PC-3 (cell line): ENCODE measurements at regions of chr13 and their contacts with region 1.

Region 1: GRCh38 chr13:73417015-73417623 is 358.3 kb downstream of the KLF5 start:
- DNase-seq: peak; percentile 64
- ATAC-seq: peak; percentile 18; the same call in 1 of the 2 replicates
- H3K4me3 ChIP-seq: no peak overlapping the region
- H3K27ac ChIP-seq: peak overlapping the region; percentile 100
- H3K4me1 ChIP-seq: peaks cover 28% of the 10 kb centered on the region
- H3K27me3 ChIP-seq: no peaks in the 10 kb centered on the region
- CTCF ChIP-seq: peak; percentile 69

Region 2: GRCh38 chr13:73058736-73059459 is 358.2 kb before region 1 on chr13 and contains the start of gene KLF5:
- CTCF ChIA-PET with region 1: no interaction called
- POLR2A ChIA-PET with region 1: no interaction called
- intact Hi-C with region 1: loop called (anchors 5 kb)
- DNase-seq: peak; percentile 96
- ATAC-seq: peak; percentile 84
- H3K4me3 ChIP-seq: peak within 1 kb of the TSS; percentile 97
- H3K27ac ChIP-seq: peak within 1 kb of the TSS; percentile 79
- H3K4me1 ChIP-seq: peaks cover 47% of the 10 kb centered on the region
- H3K27me3 ChIP-seq: no peaks in the 10 kb centered on the region
- CTCF ChIP-seq: no peak
- total RNA-seq, gene KLF5: 51.4 and 53.7 TPM in 2 replicates

Region 3: DNA sequence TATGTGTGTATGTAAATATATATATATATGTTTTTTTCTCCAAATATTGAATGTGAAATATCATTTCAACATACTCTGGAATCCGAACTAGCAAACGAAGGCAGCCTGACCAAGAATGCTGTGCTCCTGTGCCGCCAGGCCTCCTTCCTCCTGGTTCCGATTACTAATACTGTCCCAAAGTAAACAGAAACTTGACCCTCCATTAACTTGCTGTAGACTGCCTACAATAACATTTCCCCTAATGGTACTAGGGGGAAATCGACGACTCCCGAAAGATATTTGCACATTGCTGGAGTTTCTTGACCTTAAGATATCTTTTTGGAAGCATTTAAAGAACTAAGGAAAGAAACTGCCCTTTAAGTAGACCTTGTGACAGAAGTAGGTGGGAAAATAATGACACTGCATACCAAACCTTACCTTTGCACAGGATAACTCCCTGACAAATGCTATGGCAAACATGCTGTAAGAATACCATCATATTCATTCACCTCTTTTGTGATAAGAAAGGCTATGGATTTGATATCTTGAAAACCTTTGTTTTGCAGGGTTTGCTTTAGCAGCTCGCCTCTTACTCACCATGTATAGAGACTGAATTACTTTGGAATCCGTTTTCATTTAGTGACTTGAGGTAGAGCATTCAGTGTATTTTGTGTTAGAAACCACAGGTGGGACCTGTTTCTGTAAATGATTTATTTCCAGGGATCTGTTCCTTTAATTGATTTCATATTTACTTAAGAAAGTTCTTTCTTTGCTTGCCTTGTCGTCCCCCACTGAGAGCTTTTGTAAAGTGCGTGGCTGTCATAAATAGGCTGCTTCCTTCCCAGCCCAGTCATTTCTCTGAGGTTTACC is 278.3 kb before region 1 on chr13:
- CTCF ChIA-PET with region 1: no interaction called
- POLR2A ChIA-PET with region 1: no interaction called
- intact Hi-C with region 1: loop called (anchors 5 kb)
- DNase-seq: peak; percentile 83
- ATAC-seq: peak; percentile 90
- H3K4me3 ChIP-seq: peak overlapping the region; percentile 47; the same call in 1 of the 2 replicates
- H3K27ac ChIP-seq: peak overlapping the region; percentile 94
- H3K4me1 ChIP-seq: peaks cover 52% of the 10 kb centered on the region
- H3K27me3 ChIP-seq: no peaks in the 10 kb centered on the region
- CTCF ChIP-seq: no peak

Region 4: DNA sequence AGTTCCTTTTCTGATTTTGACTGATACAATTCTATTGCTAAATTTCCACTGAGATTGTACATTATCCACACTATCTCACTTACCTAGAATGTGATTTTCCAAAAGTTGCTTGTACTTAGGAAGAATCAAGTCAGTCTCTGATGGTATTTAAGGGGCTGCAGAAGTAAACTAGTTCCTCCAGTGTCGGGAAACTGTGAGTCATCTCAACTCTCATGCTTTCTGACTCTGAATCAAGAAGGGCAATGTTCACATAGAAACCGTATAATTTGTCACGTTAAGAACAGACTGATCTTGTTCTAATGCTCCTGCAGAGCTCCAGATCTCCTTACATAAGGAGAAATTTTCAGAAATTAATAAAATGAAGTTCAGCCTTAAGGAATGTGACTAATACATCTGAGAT is 11.0 kb after region 1 on chr13:
- CTCF ChIA-PET with region 1: no interaction called
- POLR2A ChIA-PET with region 1: no interaction called
- intact Hi-C with region 1: loop called (anchors 1 kb)
- DNase-seq: peak; percentile 84
- ATAC-seq: peak; percentile 71
- H3K4me3 ChIP-seq: no peak overlapping the region; the same call in 1 of the 2 replicates
- H3K27ac ChIP-seq: peak overlapping the region; percentile 99
- H3K4me1 ChIP-seq: peaks cover 37% of the 10 kb centered on the region
- H3K27me3 ChIP-seq: no peaks in the 10 kb centered on the region
- CTCF ChIP-seq: no peak

Region 5: GRCh38 chr13:73465617-73465971 is 48.5 kb after region 1 on chr13:
- CTCF ChIA-PET with region 1: no interaction called
- POLR2A ChIA-PET with region 1: no interaction called
- intact Hi-C with region 1: loop called (anchors 1 kb)
- DNase-seq: peak; percentile 85
- ATAC-seq: peak; percentile 84
- H3K4me3 ChIP-seq: no peak overlapping the region
- H3K27ac ChIP-seq: peak overlapping the region; percentile 97
- H3K4me1 ChIP-seq: peaks cover 31% of the 10 kb centered on the region
- H3K27me3 ChIP-seq: no peaks in the 10 kb centered on the region
- CTCF ChIP-seq: no peak

Region 6: DNA sequence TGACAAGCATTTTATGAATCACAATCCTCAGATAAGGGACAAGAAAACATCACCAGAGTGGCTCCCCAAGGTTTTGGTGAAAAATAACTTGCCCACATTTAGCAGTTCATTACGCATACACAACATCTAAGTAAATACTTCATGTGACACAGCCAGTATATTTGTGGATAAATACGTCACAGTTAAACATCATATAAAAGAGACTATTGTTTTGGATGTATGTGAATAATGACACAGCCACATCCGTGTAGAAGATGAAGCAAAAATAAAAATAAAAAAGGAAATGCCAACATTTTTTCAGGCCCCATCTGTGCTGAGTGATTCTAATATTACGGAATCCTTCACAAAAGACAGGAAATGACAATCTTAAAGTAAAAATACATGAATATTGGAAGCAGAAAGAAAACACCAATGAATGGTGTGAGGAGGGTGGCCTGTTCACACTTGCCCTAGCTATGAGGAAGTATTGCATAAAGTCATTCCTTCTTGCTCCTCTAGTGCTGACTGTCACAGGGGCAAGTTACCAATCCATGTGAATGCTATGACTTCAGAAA is 260.0 kb after region 1 on chr13:
- CTCF ChIA-PET with region 1: no interaction called
- POLR2A ChIA-PET with region 1: no interaction called
- intact Hi-C with region 1: loop called (anchors 2 kb)
- DNase-seq: peak; percentile 71
- ATAC-seq: peak; percentile 45
- H3K4me3 ChIP-seq: no peak overlapping the region
- H3K27ac ChIP-seq: peak overlapping the region; percentile 100
- H3K4me1 ChIP-seq: peaks cover 51% of the 10 kb centered on the region
- H3K27me3 ChIP-seq: no peaks in the 10 kb centered on the region
- CTCF ChIP-seq: no peak

Region 7: GRCh38 chr13:73967397-73968165 is 550.5 kb after region 1 on chr13:
- CTCF ChIA-PET with region 1: no interaction called
- POLR2A ChIA-PET with region 1: no interaction called
- intact Hi-C with region 1: no loop called
- DNase-seq: no peak
- ATAC-seq: no peak
- H3K4me3 ChIP-seq: no peak overlapping the region
- H3K27ac ChIP-seq: no peak overlapping the region
- H3K4me1 ChIP-seq: no peaks in the 10 kb centered on the region
- H3K27me3 ChIP-seq: no peaks in the 10 kb centered on the region
- CTCF ChIP-seq: no peak